A549 (cell line): ENCODE measurements at regions of chr3 and their contacts with region 1.

Region 1: GRCh38 chr3:52123106-52123725 is 31.0 kb downstream of the POC1A start:
- DNase-seq: peak; percentile 59 to 77
- ATAC-seq: peak; percentile 90 to 96
- H3K4me3 ChIP-seq: no peak overlapping the region
- H3K27ac ChIP-seq: no peak overlapping the region
- H3K4me1 ChIP-seq: peaks cover 11% of the 10 kb centered on the region; the same call in 2 of the 3 replicates
- CTCF ChIP-seq: peak; percentile 66
- EP300 ChIP-seq: no peak
- POLR2A ChIP-seq: no peak
- RAD21 ChIP-seq: peak; percentile 71 to 74

Region 2: GRCh38 chr3:52136513-52136912 is 13.3 kb after region 1 on chr3:
- CTCF ChIA-PET with region 1: interaction called, 25 read pairs
- POLR2A ChIA-PET with region 1: no interaction called
- DNase-seq: no peak
- ATAC-seq: no peak
- H3K4me3 ChIP-seq: no peak overlapping the region
- H3K27ac ChIP-seq: no peak overlapping the region
- H3K4me1 ChIP-seq: no peaks in the 10 kb centered on the region
- CTCF ChIP-seq: no peak
- EP300 ChIP-seq: no peak
- POLR2A ChIP-seq: no peak
- RAD21 ChIP-seq: no peak

Region 3: DNA sequence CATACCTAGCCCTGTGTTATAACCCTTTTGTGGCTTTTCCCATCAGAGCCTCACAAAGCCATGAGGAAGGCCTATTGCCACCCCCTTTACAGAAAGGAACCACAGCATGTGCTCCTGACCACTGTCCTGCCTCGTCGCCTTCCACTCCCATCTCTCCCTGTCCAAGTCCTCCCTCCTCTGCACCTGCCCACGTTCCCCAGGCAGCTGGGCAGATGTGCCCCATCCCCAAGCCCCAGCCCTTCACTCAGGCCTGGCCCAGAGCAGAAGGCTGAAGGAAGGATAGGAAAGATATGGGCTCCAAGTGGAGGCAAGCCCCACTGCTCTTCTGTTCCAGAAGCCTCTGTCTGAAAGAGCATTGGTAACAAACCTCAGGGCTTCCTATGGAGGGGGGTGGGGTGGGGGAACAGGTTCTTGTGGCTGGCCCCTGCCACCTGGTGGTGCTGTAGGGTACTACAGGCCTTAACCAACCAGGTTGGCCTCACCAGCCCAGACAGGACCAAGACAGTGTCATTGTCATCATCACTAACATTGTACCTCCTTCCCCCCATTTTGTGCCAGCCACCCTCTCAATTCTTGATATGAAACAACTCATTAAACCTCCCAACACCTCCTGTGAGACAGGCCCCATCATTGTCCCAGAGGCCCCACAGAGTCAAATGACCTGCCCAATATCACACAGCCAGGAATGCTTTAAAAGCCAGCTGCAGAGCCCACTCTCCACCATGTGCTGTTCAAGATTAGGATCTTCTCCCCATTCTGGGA is 21.0 kb after region 1 on chr3:
- CTCF ChIA-PET with region 1: interaction called, 10 read pairs
- POLR2A ChIA-PET with region 1: no interaction called
- DNase-seq: peak; percentile 69 to 84
- ATAC-seq: peak; percentile 92 to 96
- H3K4me3 ChIP-seq: no peak overlapping the region
- H3K27ac ChIP-seq: no peak overlapping the region
- H3K4me1 ChIP-seq: no peaks in the 10 kb centered on the region
- CTCF ChIP-seq: peak; percentile 71
- EP300 ChIP-seq: no peak
- POLR2A ChIP-seq: no peak
- RAD21 ChIP-seq: peak; percentile 79 to 80